ENCODE measurements at regions of chr15 and their contacts with region 1.

Region 1: DNA sequence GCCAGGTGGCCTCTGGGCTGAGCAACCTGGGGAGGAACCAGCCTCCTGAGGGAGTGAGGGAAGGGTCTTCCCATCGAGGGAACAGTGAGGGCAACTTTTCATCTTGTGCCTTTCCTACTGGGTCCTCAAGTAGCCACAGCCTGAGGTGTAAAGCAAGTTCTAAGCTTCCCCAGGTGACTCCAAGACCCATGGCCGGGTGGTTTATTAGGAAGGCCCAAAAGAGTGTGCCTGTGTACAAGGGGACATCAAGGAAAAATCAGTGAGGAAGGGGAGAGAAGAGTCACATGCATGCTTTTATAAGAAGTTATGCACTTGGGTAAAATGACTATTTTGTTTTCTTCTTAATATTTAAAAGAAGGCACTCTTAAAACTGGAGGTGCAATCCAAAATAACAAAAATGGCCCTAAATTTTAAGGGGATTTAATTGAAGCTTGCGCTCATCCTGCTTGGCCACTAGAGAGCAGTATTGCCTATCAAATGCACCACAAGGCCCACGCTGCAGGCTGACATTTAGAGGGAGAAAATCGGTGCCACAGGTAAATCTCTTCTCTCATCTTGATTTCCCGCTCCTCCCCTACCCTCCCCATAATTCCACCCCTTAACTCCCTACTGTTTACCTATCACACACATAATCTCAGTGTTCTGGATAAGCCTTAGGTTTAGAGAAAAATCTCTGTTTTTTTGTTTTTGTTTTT is 6.7 kb downstream of the NANOGP8 start:
- DNase-seq: peak; percentile 42 to 50
- H3K4me3 ChIP-seq: no peak overlapping the region
- H3K4me3 Mint-ChIP-seq: no peak overlapping the region
- H3K27ac Mint-ChIP-seq: no peak overlapping the region
- H3K4me1 ChIP-seq: no peaks in the 10 kb centered on the region
- H3K4me1 Mint-ChIP-seq: no peaks in the 10 kb centered on the region
- H3K27me3 ChIP-seq: no peaks in the 10 kb centered on the region
- H3K27me3 Mint-ChIP-seq: peaks cover 3% of the 10 kb centered on the region
- CTCF ChIP-seq: peak; percentile 76 to 81

Region 2: DNA sequence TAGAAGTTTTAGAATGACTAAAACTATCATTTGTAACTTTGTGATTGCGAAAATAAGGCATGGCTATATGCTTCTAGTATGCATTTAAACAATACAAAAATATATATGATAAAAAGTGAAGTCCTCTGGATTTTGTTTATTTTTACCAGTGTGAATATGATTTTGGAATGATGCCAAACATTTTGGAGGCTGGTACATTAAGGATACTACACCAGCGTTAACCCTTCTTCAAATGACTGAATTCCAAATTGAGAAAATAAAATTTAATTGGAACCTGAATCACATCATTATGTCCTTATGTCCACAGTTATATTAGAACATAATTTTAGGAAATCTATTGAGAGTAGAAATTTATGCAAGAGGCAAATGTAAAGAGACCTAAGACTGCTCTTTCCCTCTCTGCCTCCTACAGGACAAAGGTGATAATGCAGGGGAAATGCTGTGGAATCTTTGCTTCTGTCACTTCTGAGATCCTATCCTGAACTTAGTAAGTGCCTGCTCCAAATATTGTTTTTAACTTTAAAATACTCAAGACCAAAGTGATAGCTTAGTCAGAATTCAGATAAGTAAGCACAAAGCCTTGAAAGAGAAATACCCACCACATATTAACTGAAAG is 127.8 kb after region 1 on chr15:
- CTCF ChIA-PET with region 1: no interaction called
- POLR2A ChIA-PET with region 1: no interaction called
- intact Hi-C with region 1: loop called (anchors 5 kb)
- DNase-seq: peak in 1 of 2 experiments; percentile 4
- H3K4me3 ChIP-seq: no peak overlapping the region
- H3K4me3 Mint-ChIP-seq: no peak overlapping the region
- H3K27ac Mint-ChIP-seq: no peak overlapping the region
- H3K4me1 ChIP-seq: no peaks in the 10 kb centered on the region
- H3K4me1 Mint-ChIP-seq: no peaks in the 10 kb centered on the region
- H3K27me3 ChIP-seq: no peaks in the 10 kb centered on the region
- H3K27me3 Mint-ChIP-seq: no peaks in the 10 kb centered on the region
- CTCF ChIP-seq: peak; percentile 32 to 46

Region 3: DNA sequence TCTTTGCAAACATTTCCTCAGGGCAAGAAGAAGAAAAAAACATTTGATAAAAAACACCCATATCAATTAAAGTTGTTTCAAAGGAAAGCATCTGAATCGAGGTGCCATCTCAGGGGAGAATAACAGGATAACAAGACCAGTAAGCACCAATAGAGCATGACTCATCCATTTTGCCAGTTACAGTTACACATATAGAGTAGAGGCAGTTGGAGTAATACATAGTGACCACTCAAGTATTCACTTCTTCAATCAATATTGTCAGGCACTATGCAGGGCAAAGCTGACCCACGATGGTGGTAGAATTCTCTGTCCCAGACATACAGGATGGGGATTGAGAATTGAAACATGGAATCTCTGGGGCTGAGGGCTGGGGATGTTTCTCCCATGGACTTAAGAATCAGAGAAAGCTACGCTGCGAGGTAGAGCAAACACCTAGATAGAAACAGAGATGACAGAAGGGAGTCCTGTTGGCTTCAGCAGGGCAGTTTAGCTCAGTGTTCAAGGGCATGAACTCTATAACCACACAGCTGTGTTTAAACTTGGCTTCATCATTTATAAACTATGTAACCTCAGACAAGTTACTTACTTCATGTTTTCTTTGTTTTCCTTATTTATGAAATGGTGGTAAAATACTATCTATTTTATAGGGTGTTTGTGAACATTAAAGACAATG is 193.1 kb after region 1 on chr15:
- CTCF ChIA-PET with region 1: no interaction called
- POLR2A ChIA-PET with region 1: no interaction called
- intact Hi-C with region 1: loop called (anchors 5 kb)
- DNase-seq: no peak
- H3K4me3 ChIP-seq: no peak overlapping the region
- H3K4me3 Mint-ChIP-seq: no peak overlapping the region
- H3K27ac Mint-ChIP-seq: no peak overlapping the region
- H3K4me1 ChIP-seq: no peaks in the 10 kb centered on the region
- H3K4me1 Mint-ChIP-seq: peaks cover 6% of the 10 kb centered on the region
- H3K27me3 ChIP-seq: no peaks in the 10 kb centered on the region
- H3K27me3 Mint-ChIP-seq: no peaks in the 10 kb centered on the region
- CTCF ChIP-seq: no peak

Region 4: GRCh38 chr15:35444557-35445204 is 366.3 kb after region 1 on chr15:
- CTCF ChIA-PET with region 1: interaction called, 9 read pairs
- POLR2A ChIA-PET with region 1: no interaction called
- intact Hi-C with region 1: loop called (anchors 1 kb)
- DNase-seq: peak in 1 of 2 experiments; percentile 53
- H3K4me3 ChIP-seq: no peak overlapping the region
- H3K4me3 Mint-ChIP-seq: no peak overlapping the region
- H3K27ac Mint-ChIP-seq: no peak overlapping the region
- H3K4me1 ChIP-seq: peaks cover 8% of the 10 kb centered on the region
- H3K4me1 Mint-ChIP-seq: peaks cover 6% of the 10 kb centered on the region
- H3K27me3 ChIP-seq: no peaks in the 10 kb centered on the region
- H3K27me3 Mint-ChIP-seq: no peaks in the 10 kb centered on the region
- CTCF ChIP-seq: peak; percentile 69 to 80

Measured in Caco-2 (cell line).